ENCODE measurements at regions of chr17 and their contacts with region 1.

Region 1: GRCh38 chr17:40191237-40192208 is 14.3 kb downstream of the RAPGEFL1 start:
- DNase-seq: no peak
- H3K4me3 ChIP-seq: peak overlapping the region; percentile 47
- H3K27me3 ChIP-seq: no peaks in the 10 kb centered on the region
- CTCF ChIP-seq: peak; percentile 91

Region 2: DNA sequence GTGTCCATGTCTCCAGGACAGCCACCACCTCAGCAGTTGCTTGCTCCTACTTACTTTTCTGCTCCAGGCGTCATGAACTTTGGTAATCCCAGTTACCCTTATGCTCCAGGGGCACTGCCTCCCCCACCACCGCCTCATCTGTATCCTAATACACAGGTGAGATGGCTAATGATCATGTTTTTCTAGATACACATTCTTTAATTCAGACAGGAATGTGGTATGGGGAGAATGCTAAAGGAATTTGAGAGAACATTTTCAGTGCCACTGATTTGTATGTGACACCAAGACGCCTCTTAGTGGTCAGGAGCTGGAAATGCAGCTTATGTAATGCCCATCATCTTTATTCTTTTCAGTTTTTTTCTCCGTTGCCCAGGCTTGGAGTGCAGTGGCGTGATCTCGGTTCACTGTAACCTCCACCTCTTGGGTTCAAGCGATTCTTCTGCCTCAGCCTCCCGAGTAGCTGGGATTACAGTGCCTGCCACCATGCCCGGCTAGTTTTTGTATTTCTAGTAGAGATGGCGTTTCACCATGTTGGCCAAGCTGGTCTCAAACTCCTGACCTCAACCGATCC is 23.2 kb before region 1 on chr17:
- CTCF ChIA-PET with region 1: interaction called, 18 read pairs
- POLR2A ChIA-PET with region 1: no interaction called
- DNase-seq: no peak
- H3K4me3 ChIP-seq: no peak overlapping the region
- H3K27me3 ChIP-seq: no peaks in the 10 kb centered on the region
- CTCF ChIP-seq: peak; percentile 72

Region 3: DNA sequence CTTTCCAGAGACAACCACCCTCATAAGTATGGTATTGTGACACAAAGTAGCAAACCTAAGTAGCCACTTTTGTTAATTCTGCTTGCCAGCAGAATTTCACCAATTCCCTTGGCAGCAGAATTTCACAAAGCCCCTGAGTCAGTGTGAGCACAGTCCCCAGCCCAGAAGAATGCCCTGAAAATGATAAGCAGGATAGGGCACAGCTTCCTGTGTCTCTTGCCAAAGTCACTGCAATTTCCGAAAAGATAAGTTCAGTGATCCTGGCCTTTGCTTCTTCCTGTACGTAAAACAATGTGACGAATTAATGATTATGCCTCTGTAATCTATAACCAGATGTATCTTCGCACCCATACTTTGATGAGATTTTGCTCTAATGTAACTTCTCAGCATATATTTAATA is 11.6 kb after region 1 on chr17:
- CTCF ChIA-PET with region 1: interaction called, 23 read pairs
- POLR2A ChIA-PET with region 1: no interaction called
- DNase-seq: no peak
- H3K4me3 ChIP-seq: no peak overlapping the region
- H3K27me3 ChIP-seq: no peaks in the 10 kb centered on the region
- CTCF ChIP-seq: no peak

Region 4: DNA sequence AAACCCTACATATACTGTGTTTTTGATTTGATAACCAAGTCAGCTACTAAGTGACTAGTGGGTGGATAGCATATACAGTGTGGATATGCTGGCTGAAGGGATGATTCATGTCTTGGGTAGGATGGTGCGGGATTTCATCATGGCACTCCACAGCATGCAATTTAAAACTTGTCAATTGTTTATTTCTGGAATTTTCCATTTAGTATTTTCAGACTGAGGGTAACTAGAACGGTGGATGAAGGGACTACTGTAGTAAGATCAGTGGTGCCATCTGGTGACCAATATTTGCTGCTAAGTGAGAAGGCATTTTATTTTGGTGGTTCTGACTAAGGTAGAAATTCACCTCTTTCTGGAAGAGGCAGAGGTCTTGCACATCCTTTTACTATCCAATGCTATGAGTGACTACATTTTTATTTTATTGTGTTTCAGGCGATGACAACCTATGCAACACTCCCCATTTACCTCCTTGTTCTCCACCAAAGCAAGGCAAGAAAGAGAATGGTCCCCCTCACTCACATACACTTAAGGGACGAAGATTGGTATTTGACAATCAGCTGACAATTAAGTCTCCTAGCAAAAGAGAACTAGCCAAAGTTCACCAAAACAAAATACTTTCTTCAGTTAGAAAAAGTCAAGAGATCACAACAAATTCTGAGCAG is 99.2 kb after region 1 on chr17:
- CTCF ChIA-PET with region 1: interaction called, 54 read pairs
- POLR2A ChIA-PET with region 1: no interaction called
- DNase-seq: peak; percentile 81
- H3K4me3 ChIP-seq: no peak overlapping the region
- H3K27me3 ChIP-seq: no peaks in the 10 kb centered on the region
- CTCF ChIP-seq: peak; percentile 67

Measured in BJ (cell line).